SK-N-SH (cell line): ENCODE measurements at regions of chr15 and their contacts with region 1.

Region 1: DNA sequence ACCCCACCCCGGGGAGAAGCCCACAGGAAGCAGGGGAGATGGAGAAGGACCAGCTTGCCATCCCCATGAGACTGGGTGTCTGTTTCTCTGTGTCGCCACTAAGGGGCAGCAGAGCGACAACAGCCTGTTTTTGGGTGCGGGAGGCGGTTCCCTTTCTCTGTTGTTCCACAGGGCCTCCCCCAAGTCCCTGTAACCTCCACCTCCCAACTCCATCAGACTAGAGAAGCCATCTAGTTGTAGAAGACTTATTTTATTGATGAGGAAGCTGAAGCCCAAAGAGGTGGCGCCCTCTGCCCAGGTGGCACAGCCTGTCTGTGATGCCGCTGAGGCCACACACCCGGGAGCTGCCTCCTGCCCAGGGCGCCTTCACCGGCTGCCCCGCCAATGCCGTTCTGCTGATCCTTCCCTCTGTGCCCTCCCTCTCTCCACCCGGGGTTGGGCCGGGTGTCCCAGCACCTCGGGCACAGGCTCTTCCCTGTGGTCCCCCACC is 3.9 kb upstream of the CCDC9B start:
- DNase-seq: peak; percentile 87
- H3K4me3 ChIP-seq: no peak overlapping the region; a peak in 1 of 4 replicates
- H3K27ac ChIP-seq: peak overlapping the region in 1 of 2 experiments; percentile 98; a peak in 2 of 4 replicates
- H3K4me1 ChIP-seq: peaks cover 31 to 35% of the 10 kb centered on the region in 2 experiments; a peak in 3 of 4 replicates
- H3K27me3 ChIP-seq: no peaks in the 10 kb centered on the region
- CTCF ChIP-seq: peak; percentile 80
- EP300 ChIP-seq: no peak
- RAD21 ChIP-seq: peak; percentile 83

Region 2: GRCh38 chr15:39287322-39288195 is 1057.1 kb before region 1 on chr15:
- CTCF ChIA-PET with region 1: no interaction called
- POLR2A ChIA-PET with region 1: no interaction called
- DNase-seq: no peak
- H3K4me3 ChIP-seq: no peak overlapping the region
- H3K27ac ChIP-seq: peak overlapping the region; percentile 69 to 85; a peak in 3 of 4 replicates
- H3K4me1 ChIP-seq: peaks cover 0 to 29% of the 10 kb centered on the region in 2 experiments; a peak in 3 of 4 replicates
- H3K27me3 ChIP-seq: no peaks in the 10 kb centered on the region
- CTCF ChIP-seq: no peak
- EP300 ChIP-seq: peak in 1 of 2 experiments; percentile 49; a peak in 1 of 4 replicates
- RAD21 ChIP-seq: no peak

Region 3: GRCh38 chr15:40121911-40122638 is 222.6 kb before region 1 on chr15:
- CTCF ChIA-PET with region 1: no interaction called
- POLR2A ChIA-PET with region 1: no interaction called
- DNase-seq: no peak
- H3K4me3 ChIP-seq: no peak overlapping the region
- H3K27ac ChIP-seq: no peak overlapping the region
- H3K4me1 ChIP-seq: no peaks in the 10 kb centered on the region
- H3K27me3 ChIP-seq: no peaks in the 10 kb centered on the region; the same call in 1 of the 2 replicates
- CTCF ChIP-seq: no peak
- EP300 ChIP-seq: no peak
- RAD21 ChIP-seq: no peak

Region 4: DNA sequence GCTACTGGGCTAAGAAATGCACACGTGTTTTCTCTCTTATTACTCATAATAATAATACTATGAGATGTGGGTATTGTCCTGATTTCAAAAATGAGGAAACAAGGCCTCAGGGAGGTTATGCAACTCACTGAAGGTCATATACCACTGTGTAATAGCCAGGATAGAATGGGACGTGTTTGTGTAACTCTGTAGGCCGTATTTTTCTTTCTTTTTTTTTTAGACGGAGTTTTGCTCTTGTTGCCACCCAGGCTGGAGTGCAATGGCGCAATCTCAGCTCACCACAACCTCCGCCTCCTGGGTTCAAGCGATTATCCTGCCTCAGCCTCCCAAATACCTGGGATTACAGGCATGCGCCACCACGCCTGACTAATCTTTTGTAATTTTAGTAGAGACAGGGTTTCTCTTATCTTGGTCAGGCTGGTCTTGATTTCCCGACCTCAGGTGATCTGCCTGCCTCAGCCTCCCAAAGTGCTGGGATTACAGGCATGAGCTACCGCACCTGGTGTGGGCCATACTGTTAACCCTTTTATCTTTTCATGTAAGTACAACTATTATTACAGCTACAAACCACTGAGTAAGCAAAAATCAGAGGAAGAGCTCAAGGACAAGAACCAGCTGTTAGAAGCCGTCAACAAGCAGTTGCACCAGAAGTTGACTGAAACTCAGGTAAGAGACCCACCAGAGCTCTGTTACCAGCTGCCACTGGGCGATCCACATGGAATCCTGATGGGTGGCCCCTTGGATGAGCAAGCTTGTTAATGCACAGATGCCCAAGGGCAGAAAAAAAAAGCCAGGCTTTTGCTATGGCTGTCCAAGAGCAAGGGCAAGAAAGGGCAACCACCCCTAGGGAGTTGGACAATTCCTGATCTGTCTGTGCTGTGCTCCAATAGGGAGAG is 44.5 kb after region 1 on chr15:
- CTCF ChIA-PET with region 1: interaction called, 10 read pairs
- POLR2A ChIA-PET with region 1: interaction called, 3 read pairs
- DNase-seq: no peak
- H3K4me3 ChIP-seq: no peak overlapping the region
- H3K27ac ChIP-seq: no peak overlapping the region
- H3K4me1 ChIP-seq: peaks cover 3 to 6% of the 10 kb centered on the region in 2 experiments; a peak in 1 of 4 replicates
- H3K27me3 ChIP-seq: no peaks in the 10 kb centered on the region
- CTCF ChIP-seq: no peak
- EP300 ChIP-seq: no peak
- RAD21 ChIP-seq: no peak

Region 5: DNA sequence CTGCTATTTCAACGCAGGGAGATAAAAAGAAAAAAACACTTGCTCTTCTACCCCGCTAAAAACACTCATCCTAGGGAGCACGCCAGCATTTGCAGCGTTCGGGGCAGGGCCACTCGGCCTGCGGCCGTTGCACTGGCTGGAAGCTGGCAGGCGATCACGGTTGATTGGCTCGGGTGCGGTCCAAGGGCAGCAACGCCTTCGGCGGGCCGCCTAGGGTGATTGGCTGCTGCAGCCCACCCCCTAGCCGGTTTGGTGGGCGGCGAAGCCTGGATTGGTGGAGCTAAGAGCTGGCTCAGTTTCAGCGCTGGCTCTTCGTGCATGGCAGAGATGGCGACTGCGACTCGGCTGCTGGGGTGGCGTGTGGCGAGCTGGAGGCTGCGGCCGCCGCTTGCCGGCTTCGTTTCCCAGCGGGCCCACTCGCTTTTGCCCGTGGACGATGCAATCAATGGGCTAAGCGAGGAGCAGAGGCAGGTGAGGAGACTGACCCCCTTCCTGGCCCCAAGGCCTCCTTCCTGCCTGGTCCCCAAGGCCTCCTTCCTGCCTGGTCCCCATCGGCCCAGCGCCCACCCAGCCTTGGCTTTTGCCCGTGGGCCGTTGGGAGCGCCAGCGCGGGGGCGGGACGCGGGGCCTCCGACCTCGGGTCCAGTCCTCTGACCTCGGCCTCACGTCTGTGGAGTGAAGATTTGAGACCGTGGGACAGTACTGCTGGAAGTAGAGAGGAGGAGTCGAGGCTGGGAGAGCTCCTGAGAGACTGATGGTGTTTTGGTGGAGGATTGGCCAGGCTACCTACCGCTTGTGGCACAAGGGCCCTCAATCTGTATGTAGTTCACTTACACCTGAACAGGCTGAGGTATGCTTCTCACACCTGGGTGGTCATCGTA is 61.1 kb after region 1 on chr15 and contains the start of gene IVD:
- CTCF ChIA-PET with region 1: interaction called, 21 read pairs
- POLR2A ChIA-PET with region 1: interaction called, 22 read pairs
- DNase-seq: peak; percentile 100
- H3K4me3 ChIP-seq: peak within 1 kb of the TSS; percentile 82 to 99
- H3K27ac ChIP-seq: peak within 1 kb of the TSS; percentile 44 to 80
- H3K4me1 ChIP-seq: peaks cover 9 to 13% of the 10 kb centered on the region in 2 experiments; a peak in 1 of 4 replicates
- H3K27me3 ChIP-seq: no peaks in the 10 kb centered on the region
- CTCF ChIP-seq: no peak
- EP300 ChIP-seq: no peak
- RAD21 ChIP-seq: 0 out of 2 replicates have a peak, but pooled peaks have one; percentile 8
- polyA plus RNA-seq, gene IVD: 54.2 and 73.8 TPM in 2 replicates